ENCODE measurements at regions of chr2 and their contacts with region 1.

Region 1: DNA sequence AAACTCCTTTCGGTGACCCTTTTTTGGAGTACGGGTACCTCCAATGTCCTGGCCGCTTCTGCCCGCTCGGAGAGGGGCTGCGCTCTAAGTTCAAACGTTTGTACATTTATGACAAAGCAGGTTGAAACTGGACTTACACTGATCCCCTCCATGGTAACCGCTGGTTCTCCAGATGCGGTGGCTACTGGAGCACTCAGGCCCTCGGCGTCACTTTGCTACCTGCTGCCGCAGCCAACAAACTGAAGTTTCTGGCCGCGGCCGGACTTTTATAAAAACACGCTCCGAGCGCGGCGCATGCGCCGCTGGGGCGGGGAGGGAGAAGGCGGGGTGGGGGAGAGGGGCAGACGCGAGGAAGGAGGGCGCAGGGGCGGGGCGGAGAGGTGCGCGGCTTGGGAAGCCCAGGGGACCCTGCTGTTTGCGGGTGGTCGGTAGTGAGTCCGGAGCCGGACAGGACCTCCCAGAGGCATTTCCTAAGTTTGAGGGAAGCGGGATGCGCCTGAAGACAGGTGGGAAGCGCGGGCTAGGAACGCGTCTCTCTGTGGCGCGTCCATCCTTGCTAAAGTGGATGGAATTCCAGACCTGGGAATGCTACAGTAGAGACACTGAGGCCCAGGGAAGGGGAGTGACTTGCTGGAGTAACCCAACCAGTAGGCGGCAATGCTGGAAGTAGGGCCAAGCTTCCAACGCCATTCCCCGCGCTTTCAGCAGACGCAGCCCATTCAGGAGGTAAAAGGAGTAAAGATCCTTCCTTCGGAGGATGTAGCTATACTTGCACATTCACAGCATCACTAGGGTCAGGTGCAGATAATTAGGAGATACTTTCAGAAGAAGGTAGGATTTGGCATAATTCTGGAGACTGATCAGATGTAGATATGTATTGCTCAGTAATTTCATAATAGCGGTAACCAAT is at the start of gene CXCR4:
- DNase-seq: peak; percentile 81
- H3K4me3 Mint-ChIP-seq: peak within 1 kb of the TSS; percentile 97
- H3K27ac Mint-ChIP-seq: peak within 1 kb of the TSS; percentile 96
- H3K4me1 Mint-ChIP-seq: peaks cover 49% of the 10 kb centered on the region
- H3K27me3 Mint-ChIP-seq: peaks cover 21% of the 10 kb centered on the region
- total RNA-seq, gene CXCR4: 140 and 144 TPM in 2 replicates

Region 2: GRCh38 chr2:135052042-135052876 is 1065.9 kb before region 1 on chr2 and contains the start of gene RAB3GAP1:
- intact Hi-C with region 1: loop called (anchors 10 kb)
- DNase-seq: peak; percentile 91
- H3K4me3 Mint-ChIP-seq: peak within 1 kb of the TSS; percentile 96
- H3K27ac Mint-ChIP-seq: peak within 1 kb of the TSS; percentile 100
- H3K4me1 Mint-ChIP-seq: peaks cover 47% of the 10 kb centered on the region
- H3K27me3 Mint-ChIP-seq: no peaks in the 10 kb centered on the region
- total RNA-seq, gene RAB3GAP1: 26.6 and 30.8 TPM in 2 replicates

Region 3: GRCh38 chr2:135913727-135914365 is 204.3 kb before region 1 on chr2:
- intact Hi-C with region 1: loop called (anchors 1 kb)
- DNase-seq: no peak
- H3K4me3 Mint-ChIP-seq: no peak overlapping the region
- H3K27ac Mint-ChIP-seq: peak overlapping the region; percentile 76
- H3K4me1 Mint-ChIP-seq: peaks cover 14% of the 10 kb centered on the region
- H3K27me3 Mint-ChIP-seq: no peaks in the 10 kb centered on the region

Region 4: DNA sequence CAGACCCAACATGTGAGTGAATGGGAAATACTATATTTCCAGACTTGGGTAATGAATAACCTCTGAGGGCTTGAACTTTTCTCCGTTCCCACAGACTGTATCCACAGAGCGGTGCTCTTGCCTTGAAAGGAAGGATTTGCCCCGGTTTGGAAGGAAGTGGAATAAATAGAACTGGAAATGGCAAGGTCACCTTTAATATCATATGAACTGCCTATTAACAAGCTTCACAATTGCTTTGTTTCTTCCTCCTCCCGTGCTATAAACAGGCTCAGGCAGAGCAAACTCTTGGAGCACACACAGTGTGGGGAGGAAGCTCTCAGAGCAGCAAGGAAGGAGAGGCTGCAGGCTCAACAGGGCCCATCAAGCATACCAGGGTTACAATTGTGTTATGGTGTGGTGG is 104.2 kb before region 1 on chr2:
- intact Hi-C with region 1: loop called (anchors 2 kb)
- DNase-seq: no peak
- H3K4me3 Mint-ChIP-seq: no peak overlapping the region
- H3K27ac Mint-ChIP-seq: no peak overlapping the region
- H3K4me1 Mint-ChIP-seq: peaks cover 17% of the 10 kb centered on the region
- H3K27me3 Mint-ChIP-seq: no peaks in the 10 kb centered on the region

Region 5: GRCh38 chr2:136212423-136213378 is 94.5 kb after region 1 on chr2:
- intact Hi-C with region 1: loop called (anchors 2 kb)
- DNase-seq: no peak
- H3K4me3 Mint-ChIP-seq: no peak overlapping the region
- H3K27ac Mint-ChIP-seq: peak overlapping the region; percentile 52
- H3K4me1 Mint-ChIP-seq: peaks cover 46% of the 10 kb centered on the region
- H3K27me3 Mint-ChIP-seq: peaks cover 1% of the 10 kb centered on the region

Measured in activated T-helper 2 cell treated with anti-CD3 and anti-CD28 coated beads, Interferon-gamma antibody, Interleukin-2, Interleukin-4, amounts not matched to agents 10 μg/mL and 5 μg/mL and 100 μg/mL, durations not matched to agents 14 hours and 24 hours and 36 hours (primary cell).